ENCODE measurements at regions of chr7 and their contacts with region 1.

Region 1: GRCh38 chr7:391411-391951 is 101.5 kb downstream of the FOXL3 start:
- DNase-seq: peak; percentile 74
- H3K4me3 ChIP-seq: no peak overlapping the region
- H3K27ac ChIP-seq: no peak overlapping the region
- H3K4me1 ChIP-seq: peaks cover 17% of the 10 kb centered on the region
- H3K27me3 ChIP-seq: no peaks in the 10 kb centered on the region
- CTCF ChIP-seq: no peak

Region 2: GRCh38 chr7:305410-306151 is 85.9 kb before region 1 on chr7:
- CTCF ChIA-PET with region 1: no interaction called
- dilution Hi-C with region 1: loop called (anchors 5 kb)
- in situ Hi-C with region 1: no loop called
- intact Hi-C with region 1: no loop called
- DNase-seq: no peak
- H3K4me3 ChIP-seq: no peak overlapping the region
- H3K27ac ChIP-seq: no peak overlapping the region
- H3K4me1 ChIP-seq: no peaks in the 10 kb centered on the region
- H3K27me3 ChIP-seq: no peaks in the 10 kb centered on the region
- CTCF ChIP-seq: no peak

Region 3: GRCh38 chr7:369476-370258 is 21.8 kb before region 1 on chr7:
- CTCF ChIA-PET with region 1: no interaction called
- dilution Hi-C with region 1: no loop called
- in situ Hi-C with region 1: no loop called
- intact Hi-C with region 1: loop called (anchors 1 kb)
- DNase-seq: peak; percentile 78
- H3K4me3 ChIP-seq: peak overlapping the region in 2 of 3 experiments; percentile 4 to 36
- H3K27ac ChIP-seq: peak overlapping the region; percentile 69
- H3K4me1 ChIP-seq: peaks cover 43% of the 10 kb centered on the region
- H3K27me3 ChIP-seq: no peaks in the 10 kb centered on the region
- CTCF ChIP-seq: peak; percentile 38 to 48

Region 4: GRCh38 chr7:424961-425793 is 33.7 kb after region 1 on chr7:
- CTCF ChIA-PET with region 1: no interaction called
- dilution Hi-C with region 1: no loop called
- in situ Hi-C with region 1: no loop called
- intact Hi-C with region 1: no loop called
- DNase-seq: no peak
- H3K4me3 ChIP-seq: no peak overlapping the region
- H3K27ac ChIP-seq: no peak overlapping the region
- H3K4me1 ChIP-seq: no peaks in the 10 kb centered on the region
- H3K27me3 ChIP-seq: peaks cover 1% of the 10 kb centered on the region
- CTCF ChIP-seq: no peak

Region 5: GRCh38 chr7:444606-445005 is 53.1 kb after region 1 on chr7:
- CTCF ChIA-PET with region 1: no interaction called
- dilution Hi-C with region 1: loop called (anchors 5 kb)
- in situ Hi-C with region 1: no loop called
- intact Hi-C with region 1: no loop called
- DNase-seq: no peak
- H3K4me3 ChIP-seq: no peak overlapping the region
- H3K27ac ChIP-seq: no peak overlapping the region
- H3K4me1 ChIP-seq: no peaks in the 10 kb centered on the region
- H3K27me3 ChIP-seq: no peaks in the 10 kb centered on the region
- CTCF ChIP-seq: no peak